Heart left ventricle (tissue), 16 donors: ENCODE measurements at regions of chr5 and their contacts with region 1.

Region 1: DNA sequence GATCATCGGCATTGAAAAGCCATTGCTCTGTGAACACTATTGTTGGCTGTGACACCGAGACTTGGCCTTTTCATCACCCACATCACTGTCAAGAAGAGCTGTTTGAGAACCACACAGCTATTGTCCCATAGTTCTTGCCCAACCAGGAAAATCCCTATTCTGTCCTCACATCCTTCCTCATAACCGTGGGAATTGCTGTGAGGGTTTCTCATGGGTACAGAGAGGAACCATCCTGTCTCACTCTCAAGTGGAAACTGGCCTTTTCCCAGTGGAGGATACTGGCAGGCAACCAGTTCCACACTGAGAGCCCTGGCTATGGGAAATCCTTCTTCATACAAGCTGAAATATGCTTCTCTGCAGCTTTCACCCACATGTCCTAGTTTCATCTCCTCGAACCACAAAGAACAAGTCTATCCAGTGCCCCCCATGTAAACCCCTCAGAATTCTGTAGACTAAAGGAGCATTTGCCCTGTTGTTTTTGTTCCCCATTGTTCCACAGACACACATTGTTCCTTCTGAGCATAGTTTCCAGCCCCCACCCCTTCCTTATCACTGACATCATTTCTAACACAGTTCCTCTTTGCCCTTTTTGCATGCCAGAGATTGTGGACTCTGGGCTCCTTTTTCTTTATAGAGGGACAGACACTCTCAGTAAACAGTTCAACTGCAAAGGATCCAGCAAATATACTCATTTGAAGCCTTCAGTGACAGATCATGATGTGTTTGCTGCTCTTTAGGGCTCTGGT is 57.8 kb upstream of the C5orf46 start:
- DNase-seq: peak in 3 of 5 donors; percentile 28 to 33 (median 30)
- ATAC-seq: peak; percentile 80 to 92 (median 86)
- H3K4me3 ChIP-seq: no peak overlapping the region
- H3K27ac ChIP-seq: peak overlapping the region; percentile 50 to 92 (median 72)
- H3K4me1 ChIP-seq: peaks cover 0 to 27% (median 7%) of the 10 kb centered on the region in 12 donors
- H3K27me3 ChIP-seq: no peaks in the 10 kb centered on the region
- CTCF ChIP-seq: no peak
- POLR2A ChIP-seq: no peak

Region 2: GRCh38 chr5:147763791-147764525 is 200.2 kb before region 1 on chr5:
- intact Hi-C with region 1: no loop called
- DNase-seq: no peak
- ATAC-seq: no peak
- H3K4me3 ChIP-seq: no peak overlapping the region
- H3K27ac ChIP-seq: no peak overlapping the region
- H3K4me1 ChIP-seq: peaks cover 0 to 4% (median 0%) of the 10 kb centered on the region in 12 donors
- H3K27me3 ChIP-seq: no peaks in the 10 kb centered on the region
- CTCF ChIP-seq: no peak
- POLR2A ChIP-seq: no peak

Region 3: DNA sequence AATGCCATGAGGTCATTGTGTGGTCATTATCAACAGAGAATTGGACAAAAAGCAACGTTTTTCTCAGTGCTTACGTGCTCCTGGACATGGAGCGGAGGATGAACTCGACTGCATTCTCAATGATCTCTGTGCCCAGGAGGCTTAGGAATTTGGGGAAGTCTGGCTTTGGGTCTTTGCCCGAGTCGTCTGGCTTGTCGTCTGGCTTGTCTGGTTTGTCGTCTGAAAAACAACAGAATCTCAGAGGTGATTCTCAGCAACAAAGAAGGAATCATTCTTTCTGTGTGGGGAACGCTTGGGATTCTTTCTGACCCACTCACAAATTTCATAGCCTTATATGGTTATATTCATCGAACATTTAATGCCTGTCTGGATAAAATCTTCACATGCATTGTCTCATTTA is 62.6 kb before region 1 on chr5:
- intact Hi-C with region 1: no loop called
- DNase-seq: no peak
- ATAC-seq: no peak
- H3K4me3 ChIP-seq: no peak overlapping the region
- H3K27ac ChIP-seq: no peak overlapping the region
- H3K4me1 ChIP-seq: peaks cover 0 to 10% (median 0%) of the 10 kb centered on the region in 12 donors
- H3K27me3 ChIP-seq: no peaks in the 10 kb centered on the region
- CTCF ChIP-seq: no peak
- POLR2A ChIP-seq: no peak

Region 4: DNA sequence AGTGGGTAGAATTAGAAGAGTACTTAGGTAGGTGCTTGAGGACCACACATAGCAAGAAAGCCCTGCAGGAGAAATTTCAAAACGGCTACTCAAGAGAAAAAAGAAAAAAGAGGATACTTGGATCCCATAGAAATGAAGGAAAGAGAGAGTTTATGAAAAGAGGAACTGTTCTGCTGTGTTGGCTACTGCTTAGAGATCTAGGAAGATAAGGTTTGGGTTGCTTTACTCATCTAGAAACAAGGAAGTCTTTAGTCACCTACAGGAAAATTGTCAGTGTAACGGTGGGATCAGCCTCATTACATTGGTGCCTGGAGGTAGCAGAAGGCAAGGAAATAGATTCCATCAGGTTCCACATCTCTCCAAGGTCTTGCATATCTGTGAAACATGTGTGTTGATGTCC is 43.0 kb before region 1 on chr5:
- intact Hi-C with region 1: no loop called
- DNase-seq: no peak
- ATAC-seq: no peak
- H3K4me3 ChIP-seq: no peak overlapping the region
- H3K27ac ChIP-seq: no peak overlapping the region
- H3K4me1 ChIP-seq: no peaks in the 10 kb centered on the region
- H3K27me3 ChIP-seq: no peaks in the 10 kb centered on the region
- CTCF ChIP-seq: no peak
- POLR2A ChIP-seq: no peak

Region 5: DNA sequence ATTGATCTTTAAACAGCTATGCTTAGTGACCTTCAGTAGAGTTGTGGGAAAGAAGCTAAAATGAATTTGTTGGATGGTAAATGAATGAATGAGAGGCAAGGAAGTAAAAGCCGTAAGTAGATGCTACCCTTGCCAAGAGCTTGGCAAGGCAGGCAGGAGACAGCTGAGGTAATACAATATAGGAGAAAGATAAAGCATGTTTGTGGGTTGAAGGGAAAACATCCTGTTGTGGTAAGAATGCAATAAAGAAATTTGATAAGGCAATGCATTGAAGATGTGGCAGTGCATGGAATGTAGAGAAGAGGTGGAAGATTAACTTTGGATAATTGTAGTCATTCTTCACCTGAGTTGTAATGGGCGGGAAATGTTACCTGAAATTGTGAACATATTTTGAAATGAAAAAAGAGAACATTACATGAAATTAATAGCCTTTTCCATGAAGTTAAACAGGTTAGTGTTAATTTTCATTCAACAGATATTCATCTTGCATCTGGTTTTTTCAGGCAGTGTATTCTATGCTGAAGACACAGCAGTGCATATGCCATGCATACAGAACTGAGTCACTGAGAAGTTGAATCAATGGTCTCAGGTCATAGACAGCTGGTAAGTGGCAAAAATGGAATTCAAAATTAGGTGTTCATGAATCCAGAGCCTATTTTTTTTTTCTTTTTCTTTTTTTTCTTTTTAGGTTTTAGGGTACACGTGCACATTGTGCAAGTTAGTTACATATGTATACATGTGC is 56.3 kb after region 1 on chr5:
- intact Hi-C with region 1: loop called in 3 of 10 experiments (anchors 2 to 5 kb)
- DNase-seq: no peak
- ATAC-seq: no peak
- H3K4me3 ChIP-seq: no peak overlapping the region
- H3K27ac ChIP-seq: no peak overlapping the region
- H3K4me1 ChIP-seq: no peaks in the 10 kb centered on the region
- H3K27me3 ChIP-seq: no peaks in the 10 kb centered on the region
- CTCF ChIP-seq: no peak
- POLR2A ChIP-seq: no peak

Region 6: GRCh38 chr5:148029131-148029530 is 65.0 kb after region 1 on chr5:
- intact Hi-C with region 1: loop called in 3 of 10 experiments (anchors 2 to 5 kb)
- DNase-seq: no peak
- ATAC-seq: no peak
- H3K4me3 ChIP-seq: no peak overlapping the region
- H3K27ac ChIP-seq: no peak overlapping the region
- H3K4me1 ChIP-seq: no peaks in the 10 kb centered on the region
- H3K27me3 ChIP-seq: no peaks in the 10 kb centered on the region
- CTCF ChIP-seq: no peak
- POLR2A ChIP-seq: no peak